ENCODE measurements at regions of chr22 and their contacts with region 1.

Region 1: GRCh38 chr22:42444077-42444904 is 12.1 kb upstream of the NFAM1 start:
- DNase-seq: peak; percentile 81
- ATAC-seq: peak; percentile 67
- H3K4me3 ChIP-seq: peak overlapping the region in 4 of 5 experiments; percentile 14 to 40 (median 30)
- H3K4me3 Mint-ChIP-seq: peak overlapping the region; percentile 77
- H3K27ac ChIP-seq: no peak overlapping the region
- H3K27ac Mint-ChIP-seq: peak overlapping the region; percentile 53
- H3K4me1 ChIP-seq: peaks cover 33 to 34% of the 10 kb centered on the region in 2 donors
- H3K4me1 Mint-ChIP-seq: peaks cover 33% of the 10 kb centered on the region
- H3K27me3 ChIP-seq: peaks cover 0 to 49% (median 10%) of the 10 kb centered on the region in 4 experiments
- H3K27me3 Mint-ChIP-seq: peaks cover 10% of the 10 kb centered on the region
- CTCF ChIP-seq: peak; percentile 73

Region 2: DNA sequence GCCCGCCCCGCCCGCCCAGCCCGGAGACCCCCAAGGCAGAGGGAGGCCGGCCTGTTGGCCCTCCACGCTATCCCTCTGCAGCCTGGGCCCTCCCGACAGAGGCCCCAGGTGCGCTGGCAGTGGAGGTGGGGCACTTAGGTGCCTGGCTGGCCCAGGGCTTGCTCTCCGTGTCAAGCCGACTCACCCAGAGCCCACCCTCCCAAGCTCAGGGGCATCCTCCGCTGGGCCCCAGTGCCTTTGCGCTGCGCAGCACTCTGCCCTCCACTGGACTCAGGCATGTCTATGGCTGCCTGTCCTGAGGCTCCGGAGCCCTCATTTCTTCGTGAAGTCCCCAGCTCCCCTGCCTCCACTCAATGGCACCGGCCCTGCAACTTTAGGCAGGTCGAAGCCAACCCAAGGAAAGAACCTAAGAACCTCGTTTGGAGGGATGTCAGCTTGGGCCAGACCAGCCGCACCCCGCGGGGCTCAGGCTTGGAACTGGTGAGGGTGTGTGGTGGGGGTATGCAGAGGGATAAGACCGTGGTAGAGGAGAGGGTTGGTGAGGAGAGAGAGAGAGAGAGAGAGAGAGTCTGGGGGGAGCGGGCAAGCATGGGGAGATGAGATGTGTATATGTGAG is 486.2 kb before region 1 on chr22:
- CTCF ChIA-PET with region 1: interaction called, 12 read pairs
- POLR2A ChIA-PET with region 1: no interaction called
- intact Hi-C with region 1: no loop called
- DNase-seq: no peak
- ATAC-seq: peak; percentile 28
- H3K4me3 ChIP-seq: peak overlapping the region in 1 of 5 experiments; percentile 19
- H3K4me3 Mint-ChIP-seq: peak overlapping the region; percentile 26
- H3K27ac ChIP-seq: no peak overlapping the region
- H3K27ac Mint-ChIP-seq: no peak overlapping the region
- H3K4me1 ChIP-seq: peaks cover 11 to 22% of the 10 kb centered on the region in 2 donors
- H3K4me1 Mint-ChIP-seq: peaks cover 21% of the 10 kb centered on the region
- H3K27me3 ChIP-seq: no peaks in the 10 kb centered on the region
- H3K27me3 Mint-ChIP-seq: no peaks in the 10 kb centered on the region
- CTCF ChIP-seq: peak; percentile 44

Region 3: GRCh38 chr22:42169055-42169469 is 275.2 kb before region 1 on chr22:
- CTCF ChIA-PET with region 1: interaction called, 131 read pairs
- POLR2A ChIA-PET with region 1: no interaction called
- intact Hi-C with region 1: loop called (anchors 2 kb)
- DNase-seq: peak; percentile 79
- ATAC-seq: peak; percentile 67
- H3K4me3 ChIP-seq: no peak overlapping the region
- H3K4me3 Mint-ChIP-seq: no peak overlapping the region
- H3K27ac ChIP-seq: no peak overlapping the region
- H3K27ac Mint-ChIP-seq: peak overlapping the region; percentile 61
- H3K4me1 ChIP-seq: peaks cover 12 to 31% of the 10 kb centered on the region in 2 donors
- H3K4me1 Mint-ChIP-seq: peaks cover 29% of the 10 kb centered on the region
- H3K27me3 ChIP-seq: no peaks in the 10 kb centered on the region
- H3K27me3 Mint-ChIP-seq: no peaks in the 10 kb centered on the region
- CTCF ChIP-seq: peak; percentile 83

Region 4: DNA sequence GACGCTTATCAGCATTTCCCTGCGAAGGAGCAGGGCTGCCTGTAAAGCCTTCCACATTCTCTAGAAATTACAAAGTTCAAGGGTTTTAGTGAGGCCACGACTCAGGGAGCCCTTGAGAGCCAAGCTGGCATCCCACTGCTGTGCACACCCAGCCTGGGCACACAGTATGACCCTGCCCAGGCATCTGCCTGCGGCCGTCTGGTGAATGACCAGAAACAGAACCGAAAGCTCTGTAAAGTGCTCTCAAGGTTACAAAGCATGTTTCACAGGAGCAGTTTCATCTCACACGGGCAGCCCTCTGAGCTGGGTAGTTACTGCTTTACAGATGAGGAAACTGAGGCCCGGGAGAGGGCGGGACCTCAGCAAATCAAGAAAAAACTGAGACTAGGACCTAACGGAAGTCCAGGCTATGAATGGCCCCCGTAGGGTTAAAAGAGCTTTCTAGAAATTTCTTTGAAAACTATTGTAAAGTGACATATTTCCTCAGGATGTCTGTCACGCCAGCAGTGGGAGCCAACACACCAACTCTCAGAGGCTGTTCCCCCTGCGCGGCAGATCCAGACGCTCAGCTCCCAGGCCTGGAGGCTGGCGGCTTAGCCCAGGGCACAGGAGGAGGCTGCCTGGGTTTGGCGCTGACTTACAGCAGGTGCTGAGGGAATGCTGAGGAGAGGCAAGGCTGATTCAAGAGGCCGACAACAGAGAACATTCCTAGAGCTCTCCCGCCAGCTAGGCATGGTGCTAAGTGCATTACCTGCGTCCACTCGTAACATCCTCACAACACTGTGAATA is 166.1 kb before region 1 on chr22:
- CTCF ChIA-PET with region 1: interaction called, 21 read pairs
- POLR2A ChIA-PET with region 1: no interaction called
- intact Hi-C with region 1: no loop called
- DNase-seq: no peak
- ATAC-seq: no peak
- H3K4me3 ChIP-seq: no peak overlapping the region
- H3K4me3 Mint-ChIP-seq: no peak overlapping the region
- H3K27ac ChIP-seq: no peak overlapping the region
- H3K27ac Mint-ChIP-seq: no peak overlapping the region
- H3K4me1 ChIP-seq: peaks cover 4 to 8% of the 10 kb centered on the region in 2 donors
- H3K4me1 Mint-ChIP-seq: peaks cover 6% of the 10 kb centered on the region
- H3K27me3 ChIP-seq: peaks cover 0 to 19% (median 6%) of the 10 kb centered on the region in 4 experiments
- H3K27me3 Mint-ChIP-seq: peaks cover 14% of the 10 kb centered on the region
- CTCF ChIP-seq: no peak

Region 5: GRCh38 chr22:42473484-42474193 is 29.3 kb after region 1 on chr22:
- CTCF ChIA-PET with region 1: interaction called, 19 read pairs
- POLR2A ChIA-PET with region 1: interaction called, 3 read pairs
- intact Hi-C with region 1: no loop called
- DNase-seq: peak; percentile 68
- ATAC-seq: peak; percentile 41
- H3K4me3 ChIP-seq: no peak overlapping the region
- H3K4me3 Mint-ChIP-seq: no peak overlapping the region
- H3K27ac ChIP-seq: no peak overlapping the region
- H3K27ac Mint-ChIP-seq: no peak overlapping the region
- H3K4me1 ChIP-seq: peaks cover 0 to 3% of the 10 kb centered on the region in 2 donors
- H3K4me1 Mint-ChIP-seq: peaks cover 4% of the 10 kb centered on the region
- H3K27me3 ChIP-seq: peaks cover 0 to 1% (median 0%) of the 10 kb centered on the region in 4 experiments
- H3K27me3 Mint-ChIP-seq: peaks cover 11% of the 10 kb centered on the region
- CTCF ChIP-seq: peak; percentile 78

Region 6: GRCh38 chr22:42635531-42635930 is 191.2 kb after region 1 on chr22:
- CTCF ChIA-PET with region 1: no interaction called
- POLR2A ChIA-PET with region 1: no interaction called
- intact Hi-C with region 1: no loop called
- DNase-seq: no peak
- ATAC-seq: no peak
- H3K4me3 ChIP-seq: no peak overlapping the region
- H3K4me3 Mint-ChIP-seq: no peak overlapping the region
- H3K27ac ChIP-seq: no peak overlapping the region
- H3K27ac Mint-ChIP-seq: no peak overlapping the region
- H3K4me1 ChIP-seq: peaks cover 4 to 8% of the 10 kb centered on the region in 2 donors
- H3K4me1 Mint-ChIP-seq: peaks cover 13% of the 10 kb centered on the region
- H3K27me3 ChIP-seq: no peaks in the 10 kb centered on the region
- H3K27me3 Mint-ChIP-seq: no peaks in the 10 kb centered on the region
- CTCF ChIP-seq: no peak

Region 7: DNA sequence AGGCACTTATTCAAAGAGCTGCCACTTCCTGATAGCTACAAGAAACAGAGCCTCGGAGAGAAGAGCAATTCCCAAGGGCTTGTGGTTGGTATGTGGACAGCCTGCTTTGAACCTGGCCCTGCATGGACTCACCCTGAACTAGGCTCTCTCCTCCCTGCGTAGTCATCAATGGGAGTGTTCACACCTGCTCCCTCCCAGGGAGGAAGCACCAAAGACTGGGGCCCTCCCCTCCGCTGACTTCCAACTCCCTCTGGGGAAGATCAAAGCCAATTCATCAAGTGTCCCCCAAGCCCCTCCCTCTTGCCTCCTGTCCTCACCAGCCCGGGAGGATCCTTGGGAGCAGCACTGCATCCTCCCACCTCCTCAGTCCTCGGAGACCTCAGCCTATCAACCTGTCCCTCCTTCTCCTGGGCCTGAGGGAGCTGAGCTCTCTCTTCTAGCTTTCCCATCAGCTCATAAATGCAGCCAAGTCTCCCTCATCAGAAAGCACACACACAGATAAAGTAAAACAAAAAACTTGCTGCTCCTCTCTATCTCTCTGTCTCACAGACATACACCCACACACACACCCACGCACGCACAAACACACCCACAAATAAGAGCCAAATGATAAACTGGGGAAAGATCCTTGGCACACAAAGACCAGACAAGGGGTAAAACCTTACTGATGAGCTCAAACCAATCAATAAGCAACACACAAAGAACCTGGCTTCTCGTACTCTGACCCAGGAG is 273.1 kb after region 1 on chr22:
- CTCF ChIA-PET with region 1: no interaction called
- POLR2A ChIA-PET with region 1: no interaction called
- intact Hi-C with region 1: no loop called
- DNase-seq: no peak
- ATAC-seq: peak; percentile 23
- H3K4me3 ChIP-seq: no peak overlapping the region
- H3K4me3 Mint-ChIP-seq: peak overlapping the region; percentile 28
- H3K27ac ChIP-seq: no peak overlapping the region
- H3K27ac Mint-ChIP-seq: peak overlapping the region; percentile 51
- H3K4me1 ChIP-seq: peaks cover 37 to 39% of the 10 kb centered on the region in 2 donors
- H3K4me1 Mint-ChIP-seq: peaks cover 48% of the 10 kb centered on the region
- H3K27me3 ChIP-seq: peaks cover 0 to 26% (median 10%) of the 10 kb centered on the region in 4 experiments
- H3K27me3 Mint-ChIP-seq: peaks cover 19% of the 10 kb centered on the region
- CTCF ChIP-seq: no peak